ENCODE measurements at regions of chr18 and their contacts with region 1.

Region 1: DNA sequence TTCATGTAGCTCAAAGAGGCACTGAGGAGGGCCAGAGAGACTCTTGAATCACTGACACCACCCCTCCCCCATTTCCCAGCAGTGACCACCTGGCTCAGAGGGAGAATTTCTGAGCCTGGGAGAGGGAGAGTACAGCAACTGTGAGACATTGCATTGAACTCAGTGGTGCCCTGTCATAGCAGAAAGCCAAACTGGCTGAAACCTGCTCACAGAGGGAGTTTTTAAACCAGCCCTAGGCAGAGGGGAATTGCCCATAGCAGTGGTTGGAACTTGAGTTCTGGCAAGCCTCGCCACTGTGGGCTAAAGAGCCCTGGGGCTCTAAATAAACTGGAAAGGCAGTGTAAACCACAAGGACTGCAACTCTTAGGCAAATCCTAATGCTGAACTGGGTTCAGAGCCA is 243.1 kb downstream of the ADCYAP1 start:
- DNase-seq: no peak
- H3K4me3 ChIP-seq: no peak overlapping the region
- H3K27ac ChIP-seq: no peak overlapping the region
- H3K4me1 ChIP-seq: no peaks in the 10 kb centered on the region
- H3K27me3 ChIP-seq: no peaks in the 10 kb centered on the region
- CTCF ChIP-seq: no peak

Region 2: GRCh38 chr18:1090758-1091157 is 57.0 kb before region 1 on chr18:
- CTCF ChIA-PET with region 1: no interaction called
- dilution Hi-C with region 1: no loop called
- in situ Hi-C with region 1: no loop called
- intact Hi-C with region 1: no loop called
- DNase-seq: no peak
- H3K4me3 ChIP-seq: no peak overlapping the region
- H3K27ac ChIP-seq: no peak overlapping the region
- H3K4me1 ChIP-seq: no peaks in the 10 kb centered on the region
- H3K27me3 ChIP-seq: no peaks in the 10 kb centered on the region
- CTCF ChIP-seq: no peak

Region 3: GRCh38 chr18:1213126-1213525 is 65.4 kb after region 1 on chr18:
- CTCF ChIA-PET with region 1: no interaction called
- dilution Hi-C with region 1: no loop called
- in situ Hi-C with region 1: loop called in 1 of 2 experiments (anchors 10 kb)
- intact Hi-C with region 1: no loop called
- DNase-seq: no peak
- H3K4me3 ChIP-seq: no peak overlapping the region
- H3K27ac ChIP-seq: no peak overlapping the region
- H3K4me1 ChIP-seq: no peaks in the 10 kb centered on the region
- H3K27me3 ChIP-seq: no peaks in the 10 kb centered on the region
- CTCF ChIP-seq: no peak

Region 4: GRCh38 chr18:1544016-1544415 is 396.3 kb after region 1 on chr18:
- CTCF ChIA-PET with region 1: no interaction called
- dilution Hi-C with region 1: no loop called
- in situ Hi-C with region 1: no loop called
- intact Hi-C with region 1: no loop called
- DNase-seq: no peak
- H3K4me3 ChIP-seq: no peak overlapping the region
- H3K27ac ChIP-seq: no peak overlapping the region
- H3K4me1 ChIP-seq: no peaks in the 10 kb centered on the region
- H3K27me3 ChIP-seq: no peaks in the 10 kb centered on the region
- CTCF ChIP-seq: no peak

Measured in mammary epithelial cell (primary cell).